WTC11 (cell line): ENCODE measurements at regions of chr5 and their contacts with region 1.

Region 1: GRCh38 chr5:73298772-73299630 is 126.0 kb downstream of the TMEM174 start:
- DNase-seq: peak; percentile 62
- ATAC-seq: peak; percentile 38
- H3K4me3 Mint-ChIP-seq: peak overlapping the region; percentile 69
- H3K27ac Mint-ChIP-seq: no peak overlapping the region
- H3K4me1 Mint-ChIP-seq: peaks cover 54% of the 10 kb centered on the region
- H3K27me3 Mint-ChIP-seq: peaks cover 100% of the 10 kb centered on the region
- CTCF ChIP-seq: no peak

Region 2: DNA sequence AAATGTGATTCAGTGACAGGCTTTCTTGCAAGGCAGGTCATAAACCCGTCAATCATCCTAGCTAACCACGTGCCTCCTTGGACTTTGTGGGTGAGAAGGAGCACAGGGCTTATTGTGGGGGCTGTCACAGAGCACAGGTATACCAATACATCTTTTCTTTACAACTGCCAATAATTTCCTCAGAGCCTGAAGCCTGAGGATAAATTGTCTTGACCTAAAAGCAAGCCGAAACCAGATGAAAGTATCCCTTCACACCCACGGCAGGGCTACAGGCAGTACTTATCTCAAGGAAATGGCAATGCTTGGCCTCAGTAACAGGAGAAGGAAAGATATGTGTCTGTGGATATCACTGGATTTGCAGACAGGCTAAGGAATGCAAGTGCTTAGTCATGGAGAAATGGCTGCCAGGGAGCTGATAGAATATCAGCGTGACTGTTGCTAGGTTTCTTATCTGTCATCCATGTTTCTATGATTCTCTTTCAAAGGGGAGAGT is 701.5 kb before region 1 on chr5:
- CTCF ChIA-PET with region 1: no interaction called
- POLR2A ChIA-PET with region 1: no interaction called
- DNase-seq: no peak
- ATAC-seq: peak; percentile 52; the same call in 1 of the 2 replicates
- H3K4me3 Mint-ChIP-seq: no peak overlapping the region
- H3K27ac Mint-ChIP-seq: no peak overlapping the region
- H3K4me1 Mint-ChIP-seq: peaks cover 13% of the 10 kb centered on the region
- H3K27me3 Mint-ChIP-seq: no peaks in the 10 kb centered on the region
- CTCF ChIP-seq: no peak

Region 3: GRCh38 chr5:72988769-72989168 is 310.2 kb before region 1 on chr5:
- CTCF ChIA-PET with region 1: no interaction called
- POLR2A ChIA-PET with region 1: no interaction called
- DNase-seq: no peak
- ATAC-seq: no peak
- H3K4me3 Mint-ChIP-seq: no peak overlapping the region
- H3K27ac Mint-ChIP-seq: no peak overlapping the region
- H3K4me1 Mint-ChIP-seq: no peaks in the 10 kb centered on the region
- H3K27me3 Mint-ChIP-seq: no peaks in the 10 kb centered on the region
- CTCF ChIP-seq: no peak

Region 4: GRCh38 chr5:73233347-73234200 is 65.4 kb before region 1 on chr5:
- CTCF ChIA-PET with region 1: interaction called, 25 read pairs
- POLR2A ChIA-PET with region 1: no interaction called
- DNase-seq: peak; percentile 42
- ATAC-seq: peak; percentile 46
- H3K4me3 Mint-ChIP-seq: peak overlapping the region; percentile 67
- H3K27ac Mint-ChIP-seq: no peak overlapping the region
- H3K4me1 Mint-ChIP-seq: peaks cover 35% of the 10 kb centered on the region
- H3K27me3 Mint-ChIP-seq: peaks cover 85% of the 10 kb centered on the region
- CTCF ChIP-seq: no peak

Region 5: DNA sequence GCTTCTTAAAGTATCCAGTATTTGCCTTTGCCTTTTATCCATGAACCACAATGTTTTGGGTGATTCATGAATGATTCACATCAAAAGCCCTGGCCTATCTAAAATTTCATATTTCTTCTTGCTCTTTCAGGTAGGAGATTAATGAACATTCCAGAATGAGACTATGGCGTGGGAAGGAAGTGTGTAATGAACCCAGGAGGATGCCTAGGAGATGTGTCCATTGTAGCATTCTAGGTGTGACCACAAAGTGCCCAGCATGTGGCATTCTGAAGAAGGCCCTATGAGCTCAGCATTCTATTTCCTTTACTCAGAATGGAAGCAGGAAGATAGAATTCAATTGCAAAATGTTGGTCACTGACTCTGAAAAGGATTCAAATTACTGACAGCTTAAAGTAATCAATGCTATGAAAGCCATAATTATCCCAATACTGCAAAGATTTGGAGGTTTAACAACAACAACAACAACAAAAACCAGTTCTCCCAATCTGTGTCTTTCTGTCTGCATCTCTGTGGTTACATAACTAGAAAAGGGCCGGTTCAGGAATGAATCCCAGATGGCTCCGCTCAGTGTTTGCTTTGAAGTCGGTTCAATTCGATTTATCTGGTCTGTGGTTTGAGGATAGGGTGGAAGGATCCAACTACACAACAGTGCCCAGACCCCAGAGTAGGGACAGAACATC is 22.9 kb after region 1 on chr5:
- CTCF ChIA-PET with region 1: interaction called, 17 read pairs
- POLR2A ChIA-PET with region 1: no interaction called
- DNase-seq: no peak
- ATAC-seq: peak; percentile 64
- H3K4me3 Mint-ChIP-seq: no peak overlapping the region
- H3K27ac Mint-ChIP-seq: peak overlapping the region; percentile 40
- H3K4me1 Mint-ChIP-seq: peaks cover 27% of the 10 kb centered on the region
- H3K27me3 Mint-ChIP-seq: no peaks in the 10 kb centered on the region
- CTCF ChIP-seq: no peak

Region 6: GRCh38 chr5:73405691-73406090 is 106.7 kb after region 1 on chr5:
- CTCF ChIA-PET with region 1: interaction called, 10 read pairs
- POLR2A ChIA-PET with region 1: no interaction called
- DNase-seq: no peak
- ATAC-seq: no peak
- H3K4me3 Mint-ChIP-seq: no peak overlapping the region
- H3K27ac Mint-ChIP-seq: no peak overlapping the region
- H3K4me1 Mint-ChIP-seq: peaks cover 25% of the 10 kb centered on the region
- H3K27me3 Mint-ChIP-seq: no peaks in the 10 kb centered on the region
- CTCF ChIP-seq: no peak

Region 7: GRCh38 chr5:73419465-73420390 is 120.7 kb after region 1 on chr5:
- CTCF ChIA-PET with region 1: interaction called, 13 read pairs
- POLR2A ChIA-PET with region 1: no interaction called
- DNase-seq: peak; percentile 52
- ATAC-seq: peak; percentile 68
- H3K4me3 Mint-ChIP-seq: peak overlapping the region; percentile 69
- H3K27ac Mint-ChIP-seq: no peak overlapping the region
- H3K4me1 Mint-ChIP-seq: peaks cover 19% of the 10 kb centered on the region
- H3K27me3 Mint-ChIP-seq: peaks cover 91% of the 10 kb centered on the region
- CTCF ChIP-seq: no peak

Region 8: DNA sequence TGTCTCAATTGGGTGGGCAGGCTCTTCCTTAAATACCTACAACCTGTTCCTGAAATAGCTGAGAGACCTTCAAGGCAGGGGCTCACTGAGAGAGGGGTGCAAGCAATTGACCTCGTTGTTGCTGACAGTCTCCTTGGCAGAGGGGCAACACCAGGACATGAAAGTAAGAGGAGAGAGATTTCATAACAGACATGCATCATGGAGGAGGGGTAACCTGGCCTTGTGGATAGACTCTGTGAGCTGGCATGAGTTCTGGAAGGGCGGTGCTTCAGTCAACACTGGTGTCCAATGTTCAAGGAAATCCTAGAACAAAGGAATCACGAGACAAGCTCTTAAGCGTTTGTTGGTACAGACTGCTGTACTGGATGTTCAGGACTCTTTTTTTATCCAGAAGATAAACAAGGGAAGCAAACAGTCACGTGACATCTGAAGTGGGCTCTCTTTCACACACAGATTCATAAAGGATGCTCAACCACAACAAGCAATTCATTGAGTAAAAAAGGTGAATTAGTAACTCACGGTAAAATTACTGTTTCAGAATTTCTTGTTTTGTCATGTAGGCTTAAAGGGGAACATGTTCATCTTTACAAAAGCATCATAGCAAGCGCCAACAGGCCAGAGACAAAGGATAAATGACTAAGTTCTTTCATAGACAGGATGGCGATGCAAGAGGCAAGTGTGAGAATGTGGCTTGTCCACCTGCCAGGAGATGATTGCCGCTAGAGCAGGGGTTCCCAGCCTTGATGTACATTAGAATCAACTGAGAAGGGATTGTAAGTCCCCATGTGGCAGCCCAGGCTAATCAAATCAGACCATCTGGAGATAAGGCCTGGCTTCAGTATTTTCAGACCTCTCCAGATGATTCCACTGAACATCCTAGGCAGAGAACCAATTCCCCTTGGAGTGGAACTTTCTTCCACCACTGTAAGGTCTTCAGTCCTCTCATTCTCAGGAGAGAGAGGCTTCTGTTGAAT is 245.7 kb after region 1 on chr5:
- CTCF ChIA-PET with region 1: no interaction called
- POLR2A ChIA-PET with region 1: no interaction called
- DNase-seq: no peak
- ATAC-seq: no peak
- H3K4me3 Mint-ChIP-seq: no peak overlapping the region
- H3K27ac Mint-ChIP-seq: no peak overlapping the region
- H3K4me1 Mint-ChIP-seq: peaks cover 20% of the 10 kb centered on the region
- H3K27me3 Mint-ChIP-seq: no peaks in the 10 kb centered on the region; the same call in 1 of the 2 replicates
- CTCF ChIP-seq: no peak